ENCODE measurements at regions of chr1 and their contacts with region 1.

Region 1: GRCh38 chr1:179251675-179252074 is 22.2 kb upstream of the ABL2 start:
- DNase-seq: peak; percentile 44
- ATAC-seq: peak; percentile 92
- H3K4me3 ChIP-seq: no peak overlapping the region
- H3K27ac ChIP-seq: no peak overlapping the region
- H3K4me1 ChIP-seq: no peaks in the 10 kb centered on the region
- H3K27me3 ChIP-seq: no peaks in the 10 kb centered on the region
- CTCF ChIP-seq: peak; percentile 72
- EP300 ChIP-seq: no peak
- POLR2A ChIP-seq: no peak
- RAD21 ChIP-seq: peak; percentile 65

Region 2: GRCh38 chr1:179365320-179366092 is 113.8 kb after region 1 on chr1 and contains the start of gene AXDND1:
- CTCF ChIA-PET with region 1: interaction called, 17 read pairs
- POLR2A ChIA-PET with region 1: no interaction called
- in situ Hi-C with region 1: loop called (anchors 5 kb)
- intact Hi-C with region 1: loop called (anchors 1 kb)
- DNase-seq: peak; percentile 68
- ATAC-seq: peak; percentile 93
- H3K4me3 ChIP-seq: peak within 1 kb of the TSS; percentile 63 to 86 (median 73)
- H3K27ac ChIP-seq: peak within 1 kb of the TSS; percentile 65
- H3K4me1 ChIP-seq: peaks cover 18% of the 10 kb centered on the region; the same call in 1 of the 2 replicates
- H3K27me3 ChIP-seq: no peaks in the 10 kb centered on the region
- CTCF ChIP-seq: peak; percentile 33; the same call in 1 of the 2 replicates
- EP300 ChIP-seq: no peak
- POLR2A ChIP-seq: peak; percentile 30 to 74; a peak in 2 of 4 replicates
- RAD21 ChIP-seq: no peak
- total RNA-seq, gene AXDND1: 0.14 and 0.40 TPM in 2 replicates

Region 3: GRCh38 chr1:179447489-179447888 is 195.8 kb after region 1 on chr1:
- CTCF ChIA-PET with region 1: interaction called, 4 read pairs
- POLR2A ChIA-PET with region 1: no interaction called
- in situ Hi-C with region 1: no loop called
- intact Hi-C with region 1: loop called (anchors 2 kb)
- DNase-seq: peak; percentile 35
- ATAC-seq: no peak; the same call in 2 of the 3 replicates
- H3K4me3 ChIP-seq: no peak overlapping the region
- H3K27ac ChIP-seq: no peak overlapping the region
- H3K4me1 ChIP-seq: no peaks in the 10 kb centered on the region
- H3K27me3 ChIP-seq: no peaks in the 10 kb centered on the region; a peak in 1 of 5 replicates
- CTCF ChIP-seq: peak; percentile 37
- EP300 ChIP-seq: no peak
- POLR2A ChIP-seq: no peak
- RAD21 ChIP-seq: no peak

Region 4: DNA sequence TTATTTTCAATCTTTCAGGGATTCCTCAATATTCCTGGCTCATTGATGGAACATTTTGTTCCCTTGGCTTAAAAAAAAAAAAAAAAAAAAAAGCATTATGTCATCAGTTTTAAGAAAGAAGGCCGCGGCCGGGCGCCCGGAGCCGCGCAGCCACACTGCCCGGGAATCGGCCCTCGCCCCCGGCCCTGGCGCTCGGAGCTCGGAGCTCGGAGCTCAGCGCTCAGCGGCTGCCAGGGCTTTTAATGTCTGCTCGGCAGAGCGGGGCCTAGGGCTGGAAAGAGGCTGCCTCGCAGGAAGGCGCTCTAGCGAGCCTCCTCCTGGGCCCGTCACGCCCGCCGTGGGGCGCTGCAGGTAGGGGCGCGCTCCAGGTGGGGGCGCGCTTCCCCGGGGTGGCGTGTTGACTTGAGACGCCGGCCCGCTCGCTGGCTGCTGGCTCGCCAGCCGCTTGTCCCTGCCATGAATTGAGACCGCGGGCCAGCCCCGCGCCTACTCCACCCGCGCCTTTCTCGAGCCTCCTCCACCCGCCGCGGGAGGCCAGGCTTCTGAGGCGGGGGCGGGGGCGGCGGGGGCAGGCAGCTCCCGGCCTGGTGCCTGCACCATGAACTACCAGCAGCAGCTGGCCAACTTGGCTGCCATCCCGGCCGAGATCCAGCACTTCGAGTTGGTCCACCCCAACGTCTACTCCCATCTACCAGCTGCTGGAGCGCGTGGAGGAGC is 334.6 kb after region 1 on chr1:
- CTCF ChIA-PET with region 1: no interaction called
- POLR2A ChIA-PET with region 1: no interaction called
- in situ Hi-C with region 1: loop called (anchors 25 kb)
- intact Hi-C with region 1: no loop called
- DNase-seq: no peak
- ATAC-seq: no peak
- H3K4me3 ChIP-seq: no peak overlapping the region
- H3K27ac ChIP-seq: no peak overlapping the region
- H3K4me1 ChIP-seq: no peaks in the 10 kb centered on the region
- H3K27me3 ChIP-seq: peaks cover 0 to 15% of the 10 kb centered on the region in 2 experiments; a peak in 1 of 5 replicates
- CTCF ChIP-seq: no peak
- EP300 ChIP-seq: no peak
- POLR2A ChIP-seq: no peak
- RAD21 ChIP-seq: no peak

Measured in HepG2 (cell line).